ENCODE measurements at regions of chr10 and their contacts with region 1.

Region 1: GRCh38 chr10:114615600-114616007 is 42.5 kb downstream of the ABLIM1 start:
- DNase-seq: peak; percentile 16
- H3K4me3 Mint-ChIP-seq: no peak overlapping the region
- H3K27ac Mint-ChIP-seq: peak overlapping the region; percentile 44
- H3K4me1 Mint-ChIP-seq: peaks cover 30% of the 10 kb centered on the region
- H3K27me3 Mint-ChIP-seq: no peaks in the 10 kb centered on the region

Region 2: GRCh38 chr10:113922787-113923570 is 692.6 kb before region 1 on chr10:
- intact Hi-C with region 1: no loop called
- DNase-seq: no peak
- H3K4me3 Mint-ChIP-seq: no peak overlapping the region
- H3K27ac Mint-ChIP-seq: no peak overlapping the region
- H3K4me1 Mint-ChIP-seq: no peaks in the 10 kb centered on the region
- H3K27me3 Mint-ChIP-seq: peaks cover 36% of the 10 kb centered on the region

Region 3: DNA sequence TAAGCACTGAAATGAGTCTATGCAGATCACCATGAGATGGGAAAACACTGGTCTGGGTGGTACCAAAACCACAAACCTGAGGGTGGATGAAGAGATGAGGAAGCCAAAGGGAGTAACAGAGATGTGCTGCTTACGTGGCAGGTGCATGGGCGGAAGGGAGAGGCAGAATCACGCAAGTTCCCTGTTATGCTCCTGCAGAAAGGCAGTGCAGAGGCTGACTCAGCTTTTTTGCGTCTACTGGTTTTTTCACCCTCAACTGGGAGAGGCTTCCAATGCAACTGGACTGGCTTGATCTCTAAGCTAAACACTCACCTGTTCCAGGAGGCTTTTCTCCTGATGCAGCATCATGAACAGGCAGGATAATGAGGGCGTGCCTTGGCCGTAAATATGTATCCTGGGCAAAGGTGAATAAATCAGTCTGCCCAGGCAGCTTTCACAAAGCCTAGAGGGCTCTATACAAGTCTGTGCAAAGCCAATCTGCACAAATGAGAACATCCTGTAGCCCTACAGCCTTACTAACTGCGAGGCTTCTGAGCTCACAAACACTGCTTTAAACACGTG is 115.9 kb before region 1 on chr10:
- intact Hi-C with region 1: loop called (anchors 5 kb)
- DNase-seq: peak; percentile 55
- H3K4me3 Mint-ChIP-seq: peak overlapping the region; percentile 53
- H3K27ac Mint-ChIP-seq: peak overlapping the region; percentile 92
- H3K4me1 Mint-ChIP-seq: peaks cover 72% of the 10 kb centered on the region
- H3K27me3 Mint-ChIP-seq: no peaks in the 10 kb centered on the region

Region 4: DNA sequence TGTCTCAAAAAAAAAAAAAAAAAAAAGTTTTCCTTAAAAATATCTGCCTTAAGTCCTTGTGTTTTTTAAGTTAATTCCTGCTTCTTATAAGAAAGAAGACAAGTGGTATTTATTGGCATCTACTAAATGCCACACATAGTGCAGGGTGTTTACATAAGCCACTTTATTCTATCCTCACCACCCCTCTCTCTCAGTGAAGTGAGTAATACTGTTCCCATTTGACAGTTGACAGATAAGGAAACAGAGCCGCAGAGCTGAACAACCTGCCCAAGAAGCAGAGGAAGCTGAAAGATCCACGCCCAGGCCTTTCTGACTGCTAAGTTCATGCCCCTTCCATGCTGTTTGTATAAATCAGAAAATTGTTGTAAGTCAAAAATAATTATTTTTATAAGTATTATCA is 11.7 kb before region 1 on chr10:
- intact Hi-C with region 1: loop called (anchors 1 kb)
- DNase-seq: peak; percentile 23
- H3K4me3 Mint-ChIP-seq: no peak overlapping the region
- H3K27ac Mint-ChIP-seq: no peak overlapping the region
- H3K4me1 Mint-ChIP-seq: peaks cover 42% of the 10 kb centered on the region
- H3K27me3 Mint-ChIP-seq: no peaks in the 10 kb centered on the region

Region 5: DNA sequence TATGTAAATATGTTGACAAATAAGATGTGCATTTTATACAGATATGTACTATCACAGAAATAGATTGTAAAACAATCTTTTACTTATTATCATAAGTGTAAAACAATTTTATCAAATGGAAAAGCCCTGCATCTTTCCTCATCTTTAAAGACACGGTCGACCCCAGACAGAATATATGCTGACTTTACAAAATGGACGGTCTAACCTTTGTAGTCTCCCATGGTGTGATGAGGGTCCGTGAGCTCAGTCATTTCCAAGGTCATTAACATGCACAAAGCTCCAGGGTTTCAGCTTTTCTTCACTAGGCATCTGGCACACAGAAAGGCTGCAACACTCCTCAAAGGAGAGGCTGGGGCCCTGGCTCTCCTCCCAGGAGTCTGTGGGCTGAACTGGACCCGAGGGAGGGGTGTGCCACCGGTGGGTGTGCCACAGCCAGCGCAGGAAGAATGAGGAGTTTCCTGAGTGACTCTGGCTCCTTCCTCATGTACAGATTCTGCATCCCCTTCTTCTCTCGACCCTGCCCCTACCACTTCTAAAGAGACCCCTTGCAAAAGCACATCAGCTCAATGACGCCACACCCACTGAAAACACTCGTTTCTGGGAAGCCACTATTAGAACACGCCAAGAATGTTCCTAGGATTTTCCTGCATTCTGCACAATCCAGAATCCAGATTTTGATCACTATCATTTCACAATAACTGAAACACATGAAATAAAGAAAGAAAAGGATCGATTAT is 68.6 kb after region 1 on chr10:
- intact Hi-C with region 1: no loop called
- DNase-seq: no peak
- H3K4me3 Mint-ChIP-seq: no peak overlapping the region
- H3K27ac Mint-ChIP-seq: no peak overlapping the region
- H3K4me1 Mint-ChIP-seq: no peaks in the 10 kb centered on the region
- H3K27me3 Mint-ChIP-seq: peaks cover 15% of the 10 kb centered on the region

Region 6: GRCh38 chr10:114821293-114821914 is 205.8 kb after region 1 on chr10 and contains the start of gene FHIP2A:
- intact Hi-C with region 1: loop called (anchors 5 kb)
- DNase-seq: peak; percentile 82
- H3K4me3 Mint-ChIP-seq: peak within 1 kb of the TSS; percentile 93
- H3K27ac Mint-ChIP-seq: peak within 1 kb of the TSS; percentile 86
- H3K4me1 Mint-ChIP-seq: peaks cover 42% of the 10 kb centered on the region
- H3K27me3 Mint-ChIP-seq: peaks cover 19% of the 10 kb centered on the region
- total RNA-seq, gene FHIP2A: 26.3 and 26.9 TPM in 2 replicates